Motor neuron (in vitro differentiated cells): ENCODE measurements at regions of chr11 and their contacts with region 1.

Region 1: DNA sequence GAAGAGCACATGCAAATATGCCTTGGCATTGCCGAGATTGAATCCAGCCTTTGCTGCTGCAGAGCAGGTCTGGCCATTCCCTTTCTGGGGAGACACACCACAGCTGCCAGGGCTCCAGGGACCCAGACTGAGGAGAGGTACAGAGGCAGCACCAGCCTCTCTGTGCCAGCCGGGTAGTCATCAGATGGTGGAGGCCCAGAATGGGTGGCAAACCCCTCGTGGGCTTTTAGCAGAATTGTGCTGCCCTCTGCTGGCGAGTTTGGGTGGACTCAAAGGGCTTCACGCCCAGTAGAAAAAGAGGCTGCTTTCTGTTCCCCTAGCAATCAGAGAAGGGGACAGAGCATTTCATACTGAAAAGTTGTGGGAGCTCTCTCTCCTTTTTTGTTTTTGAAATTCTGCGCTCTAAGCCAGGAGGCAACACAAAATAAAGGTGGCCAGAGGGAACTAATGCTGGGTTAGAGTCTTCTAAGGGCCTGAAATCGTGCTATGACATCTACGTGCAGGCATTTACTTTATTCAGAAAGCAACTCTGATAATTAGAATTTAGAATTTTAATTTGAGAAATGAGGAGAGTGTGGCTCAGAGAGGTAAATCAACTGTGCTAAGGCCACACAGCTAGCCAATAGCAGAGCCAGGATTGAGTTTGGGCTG is 158.8 kb upstream of the NAV2 start:
- ATAC-seq: peak; percentile 53 to 93 (median 66)
- H3K4me3 ChIP-seq: no peak overlapping the region
- H3K27ac ChIP-seq: peak overlapping the region in 1 of 2 donors; percentile 41
- H3K4me1 ChIP-seq: peaks cover 30 to 32% of the 10 kb centered on the region in 2 donors

Region 2: GRCh38 chr11:19076744-19077589 is 476.8 kb before region 1 on chr11:
- in situ Hi-C with region 1: loop called in 7 of 9 experiments (anchors 25 kb)
- ATAC-seq: peak; percentile 41 to 81 (median 57)
- H3K4me3 ChIP-seq: no peak overlapping the region
- H3K27ac ChIP-seq: no peak overlapping the region
- H3K4me1 ChIP-seq: peaks cover 0 to 6% of the 10 kb centered on the region in 2 donors

Region 3: DNA sequence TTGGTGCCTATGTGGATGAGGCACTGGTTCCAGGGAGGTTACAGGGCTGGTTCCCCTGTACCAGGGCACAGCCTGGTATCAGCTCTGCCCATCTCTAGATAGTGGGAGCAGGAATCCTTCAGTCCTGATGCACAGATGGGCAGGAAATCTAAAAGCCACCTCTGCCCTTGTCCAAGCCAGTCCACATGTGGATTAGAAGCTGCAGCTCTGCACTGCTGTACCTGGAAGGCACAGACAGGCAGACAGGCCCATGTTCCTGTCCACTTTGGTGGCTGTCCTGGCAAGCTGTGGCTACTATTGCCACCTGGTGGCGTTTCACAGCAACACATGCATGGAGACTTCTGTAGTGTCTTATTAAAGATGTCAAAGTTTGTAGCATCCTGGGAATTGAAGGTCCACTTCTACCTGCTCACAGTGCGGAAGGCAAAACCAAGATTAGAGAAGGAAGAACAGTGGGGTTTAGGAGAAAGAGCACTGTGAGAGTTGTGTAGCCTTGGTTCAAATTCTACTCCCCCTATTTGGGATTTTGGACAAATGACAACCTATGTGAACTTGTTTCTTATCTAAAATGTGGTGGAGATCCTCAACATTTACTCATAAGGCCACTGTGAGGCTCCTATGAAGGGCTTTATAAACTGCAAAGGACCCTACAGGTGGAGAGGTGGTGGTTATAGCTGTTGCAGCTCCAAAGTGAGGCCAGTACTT is 188.9 kb after region 1 on chr11:
- in situ Hi-C with region 1: loop called in 1 of 9 experiments (anchors 25 kb)
- ATAC-seq: peak; percentile 85 to 97 (median 94)
- H3K4me3 ChIP-seq: no peak overlapping the region
- H3K27ac ChIP-seq: no peak overlapping the region
- H3K4me1 ChIP-seq: peaks cover 16 to 18% of the 10 kb centered on the region in 2 donors

Region 4: GRCh38 chr11:19777377-19778102 is 223.7 kb after region 1 on chr11:
- in situ Hi-C with region 1: no loop called
- ATAC-seq: peak; percentile 22 to 77 (median 68)
- H3K4me3 ChIP-seq: peak overlapping the region; percentile 44 to 90 (median 62)
- H3K27ac ChIP-seq: peak overlapping the region in 1 of 2 donors; percentile 36
- H3K4me1 ChIP-seq: peaks cover 27 to 31% of the 10 kb centered on the region in 2 donors

Region 5: DNA sequence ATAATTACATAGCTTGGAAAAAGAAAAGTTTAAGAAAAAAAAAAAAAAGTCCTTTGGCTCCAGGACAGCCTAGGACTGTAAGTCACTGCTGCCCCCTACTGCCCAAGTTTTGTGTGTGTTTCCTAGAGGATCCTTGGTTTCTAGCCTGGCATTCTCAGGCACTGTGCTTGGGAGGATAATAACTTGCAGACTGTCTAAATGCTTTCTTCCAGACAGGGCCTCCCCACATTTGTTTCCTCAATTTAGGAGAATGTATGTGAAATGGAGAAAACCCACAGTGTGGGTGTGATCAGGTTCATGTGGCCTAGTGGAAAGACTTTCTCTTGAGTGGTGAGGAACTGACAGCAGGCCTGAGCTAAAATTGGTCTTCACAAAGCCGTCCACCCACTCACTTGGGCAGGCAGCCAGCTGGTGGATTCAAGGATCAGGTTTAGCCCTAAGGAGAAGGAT is 349.8 kb after region 1 on chr11:
- in situ Hi-C with region 1: loop called in 5 of 9 experiments (anchors 25 kb)
- ATAC-seq: peak; percentile 72 to 91 (median 80)
- H3K4me3 ChIP-seq: no peak overlapping the region
- H3K27ac ChIP-seq: no peak overlapping the region
- H3K4me1 ChIP-seq: peaks cover 0 to 8% of the 10 kb centered on the region in 2 donors

Region 6: DNA sequence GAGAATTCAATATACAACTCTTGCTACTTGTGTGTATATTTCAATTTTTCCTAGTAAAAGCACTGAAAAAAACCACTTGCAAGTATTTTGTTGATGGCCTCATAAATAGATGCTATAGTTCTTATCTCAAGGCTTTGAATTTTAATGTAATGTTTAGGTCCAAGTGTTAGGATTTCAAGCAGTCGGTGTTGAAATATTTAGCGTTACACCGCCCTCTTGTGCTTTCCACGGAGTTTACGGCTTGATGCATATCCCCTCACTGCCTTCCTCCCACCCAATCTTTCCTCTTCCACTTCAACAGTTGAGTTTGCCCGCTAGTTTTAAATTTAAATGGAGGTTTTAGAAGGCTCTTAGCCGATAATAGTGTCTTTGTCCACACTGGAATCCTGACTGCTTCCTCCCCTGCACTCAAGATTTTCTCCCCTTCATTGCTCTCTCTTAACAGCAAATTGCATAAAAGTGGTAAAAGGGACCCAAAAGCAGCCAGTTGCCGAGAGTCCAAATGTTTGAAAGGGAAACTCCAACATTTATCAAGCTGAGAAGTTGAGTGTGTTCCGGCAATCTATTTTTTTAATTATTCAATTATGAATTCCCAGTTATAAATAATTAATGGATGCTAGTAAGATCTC is 783.8 kb after region 1 on chr11:
- in situ Hi-C with region 1: loop called in 2 of 9 experiments (anchors 25 kb)
- ATAC-seq: peak in 5 of 8 experiments; percentile 37 to 65 (median 43)
- H3K4me3 ChIP-seq: no peak overlapping the region
- H3K27ac ChIP-seq: no peak overlapping the region
- H3K4me1 ChIP-seq: peaks cover 0 to 4% of the 10 kb centered on the region in 2 donors